ENCODE measurements at regions of chr3 and their contacts with region 1.

Region 1: GRCh38 chr3:196518966-196519717 is 4.0 kb upstream of the SMCO1 start:
- DNase-seq: peak; percentile 82
- H3K4me3 ChIP-seq: no peak overlapping the region
- H3K27ac ChIP-seq: no peak overlapping the region
- H3K4me1 ChIP-seq: no peaks in the 10 kb centered on the region
- H3K27me3 ChIP-seq: no peaks in the 10 kb centered on the region
- CTCF ChIP-seq: peak; percentile 48 to 69 (median 52)
- EP300 ChIP-seq: no peak
- POLR2A ChIP-seq: no peak

Region 2: DNA sequence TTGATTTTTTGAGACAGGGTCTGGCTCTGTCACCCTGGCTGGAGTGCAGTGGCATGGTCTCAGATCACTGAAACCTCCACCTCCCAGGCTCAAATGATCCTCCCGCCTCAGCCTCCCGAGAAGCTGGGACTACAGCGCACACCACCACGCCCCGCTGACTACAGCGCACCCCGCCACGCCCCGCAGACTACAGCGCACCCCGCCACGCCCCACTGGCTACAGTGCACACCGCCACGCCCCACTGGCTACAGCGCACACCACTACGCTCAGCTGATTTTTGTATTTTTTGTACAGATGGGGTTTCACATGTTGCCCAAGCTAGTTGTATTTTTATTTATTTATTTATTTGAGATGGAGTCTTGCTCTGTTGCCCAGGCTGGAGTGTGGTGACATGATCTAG is 267.2 kb before region 1 on chr3:
- intact Hi-C with region 1: loop called (anchors 1 kb)
- DNase-seq: no peak
- H3K4me3 ChIP-seq: no peak overlapping the region
- H3K27ac ChIP-seq: no peak overlapping the region
- H3K4me1 ChIP-seq: no peaks in the 10 kb centered on the region
- H3K27me3 ChIP-seq: no peaks in the 10 kb centered on the region
- CTCF ChIP-seq: no peak
- EP300 ChIP-seq: no peak
- POLR2A ChIP-seq: no peak

Region 3: GRCh38 chr3:196665962-196666867 is 147.1 kb after region 1 on chr3:
- intact Hi-C with region 1: no loop called
- DNase-seq: no peak
- H3K4me3 ChIP-seq: no peak overlapping the region
- H3K27ac ChIP-seq: no peak overlapping the region
- H3K4me1 ChIP-seq: peaks cover 0 to 3% (median 0%) of the 10 kb centered on the region in 4 donors
- H3K27me3 ChIP-seq: no peaks in the 10 kb centered on the region
- CTCF ChIP-seq: no peak
- EP300 ChIP-seq: no peak
- POLR2A ChIP-seq: no peak

Region 4: GRCh38 chr3:196774191-196774820 is 255.2 kb after region 1 on chr3:
- intact Hi-C with region 1: no loop called
- DNase-seq: no peak
- H3K4me3 ChIP-seq: no peak overlapping the region
- H3K27ac ChIP-seq: peak overlapping the region in 1 of 4 donors; percentile 10
- H3K4me1 ChIP-seq: peaks cover 0 to 59% (median 46%) of the 10 kb centered on the region in 4 donors
- H3K27me3 ChIP-seq: no peaks in the 10 kb centered on the region
- CTCF ChIP-seq: no peak
- EP300 ChIP-seq: no peak
- POLR2A ChIP-seq: no peak